IMR-90 (cell line): ENCODE measurements at regions of chr16 and their contacts with region 1.

Region 1: GRCh38 chr16:70703041-70703834 is 17.4 kb upstream of the MTSS2 start:
- DNase-seq: peak; percentile 94
- ATAC-seq: peak; percentile 73
- H3K4me3 ChIP-seq: no peak overlapping the region
- H3K27ac ChIP-seq: peak overlapping the region; percentile 80
- H3K4me1 ChIP-seq: peaks cover 65% of the 10 kb centered on the region
- H3K27me3 ChIP-seq: no peaks in the 10 kb centered on the region
- CTCF ChIP-seq: peak; percentile 55
- POLR2A ChIP-seq: peak; percentile 50; the same call in 1 of the 2 replicates
- RAD21 ChIP-seq: peak; percentile 70

Region 2: GRCh38 chr16:70691223-70692129 is 11.8 kb before region 1 on chr16:
- CTCF ChIA-PET with region 1: interaction called, 8 read pairs
- POLR2A ChIA-PET with region 1: interaction called, 14 read pairs
- dilution Hi-C with region 1: no loop called
- in situ Hi-C with region 1: no loop called
- intact Hi-C with region 1: loop called (anchors 2 kb)
- DNase-seq: peak; percentile 97
- ATAC-seq: peak; percentile 50
- H3K4me3 ChIP-seq: no peak overlapping the region
- H3K27ac ChIP-seq: peak overlapping the region; percentile 91
- H3K4me1 ChIP-seq: peaks cover 75% of the 10 kb centered on the region
- H3K27me3 ChIP-seq: no peaks in the 10 kb centered on the region
- CTCF ChIP-seq: no peak
- POLR2A ChIP-seq: peak; percentile 29; the same call in 1 of the 2 replicates
- RAD21 ChIP-seq: no peak

Region 3: DNA sequence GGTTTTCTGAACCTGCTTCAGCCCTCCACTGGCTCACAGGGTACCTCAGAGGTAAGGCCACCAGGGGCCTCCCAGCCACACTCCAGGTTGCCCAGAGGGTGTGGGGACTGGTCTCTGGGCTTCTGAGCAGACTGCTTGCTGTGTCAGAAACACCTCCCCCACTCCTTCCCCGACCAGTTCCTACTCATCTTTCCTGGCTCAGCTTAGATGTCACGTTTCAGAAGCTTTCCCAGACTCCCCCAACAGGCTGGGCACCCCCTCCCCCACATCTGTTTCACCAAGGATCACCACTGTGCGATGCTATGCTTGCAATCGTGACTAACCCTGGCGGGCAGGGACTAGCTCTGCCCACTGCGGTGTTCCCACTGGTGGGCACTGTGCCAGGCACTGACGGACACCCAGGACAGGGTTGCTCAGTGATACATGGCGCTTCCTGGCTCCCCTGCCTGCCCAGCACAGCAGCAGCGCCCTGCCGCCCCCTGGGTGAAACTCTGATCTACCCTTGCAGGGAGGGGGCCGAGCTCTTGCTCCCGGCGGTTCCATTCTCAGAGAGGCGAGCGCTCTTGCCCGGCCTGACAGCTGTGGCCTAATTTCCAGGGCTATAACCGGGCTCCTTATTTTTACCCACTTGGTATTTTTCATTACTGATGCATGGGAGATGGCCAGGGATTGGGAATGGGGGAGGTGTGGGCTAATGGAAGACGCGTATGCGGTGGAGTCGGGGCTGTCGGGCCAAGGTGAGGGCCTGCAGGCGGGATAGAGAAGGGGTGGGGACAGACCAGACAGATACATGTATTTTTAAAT is 12.0 kb after region 1 on chr16:
- CTCF ChIA-PET with region 1: interaction called, 10 read pairs
- POLR2A ChIA-PET with region 1: no interaction called
- dilution Hi-C with region 1: no loop called
- in situ Hi-C with region 1: no loop called
- intact Hi-C with region 1: no loop called
- DNase-seq: peak; percentile 98
- ATAC-seq: peak; percentile 93
- H3K4me3 ChIP-seq: no peak overlapping the region
- H3K27ac ChIP-seq: peak overlapping the region; percentile 89
- H3K4me1 ChIP-seq: peaks cover 38% of the 10 kb centered on the region
- H3K27me3 ChIP-seq: no peaks in the 10 kb centered on the region
- CTCF ChIP-seq: peak; percentile 28; the same call in 1 of the 2 replicates
- POLR2A ChIP-seq: peak; percentile 71
- RAD21 ChIP-seq: peak; percentile 40

Region 4: GRCh38 chr16:70750893-70751475 is 47.7 kb after region 1 on chr16:
- CTCF ChIA-PET with region 1: no interaction called
- POLR2A ChIA-PET with region 1: no interaction called
- dilution Hi-C with region 1: no loop called
- in situ Hi-C with region 1: no loop called
- intact Hi-C with region 1: no loop called
- DNase-seq: peak; percentile 99
- ATAC-seq: peak; percentile 82
- H3K4me3 ChIP-seq: no peak overlapping the region
- H3K27ac ChIP-seq: peak overlapping the region; percentile 72
- H3K4me1 ChIP-seq: peaks cover 46% of the 10 kb centered on the region
- H3K27me3 ChIP-seq: no peaks in the 10 kb centered on the region
- CTCF ChIP-seq: 0 out of 2 replicates have a peak, but pooled peaks have one; percentile 9
- POLR2A ChIP-seq: no peak
- RAD21 ChIP-seq: peak; percentile 31